ENCODE measurements at regions of chr2 and their contacts with region 1.

Region 1: DNA sequence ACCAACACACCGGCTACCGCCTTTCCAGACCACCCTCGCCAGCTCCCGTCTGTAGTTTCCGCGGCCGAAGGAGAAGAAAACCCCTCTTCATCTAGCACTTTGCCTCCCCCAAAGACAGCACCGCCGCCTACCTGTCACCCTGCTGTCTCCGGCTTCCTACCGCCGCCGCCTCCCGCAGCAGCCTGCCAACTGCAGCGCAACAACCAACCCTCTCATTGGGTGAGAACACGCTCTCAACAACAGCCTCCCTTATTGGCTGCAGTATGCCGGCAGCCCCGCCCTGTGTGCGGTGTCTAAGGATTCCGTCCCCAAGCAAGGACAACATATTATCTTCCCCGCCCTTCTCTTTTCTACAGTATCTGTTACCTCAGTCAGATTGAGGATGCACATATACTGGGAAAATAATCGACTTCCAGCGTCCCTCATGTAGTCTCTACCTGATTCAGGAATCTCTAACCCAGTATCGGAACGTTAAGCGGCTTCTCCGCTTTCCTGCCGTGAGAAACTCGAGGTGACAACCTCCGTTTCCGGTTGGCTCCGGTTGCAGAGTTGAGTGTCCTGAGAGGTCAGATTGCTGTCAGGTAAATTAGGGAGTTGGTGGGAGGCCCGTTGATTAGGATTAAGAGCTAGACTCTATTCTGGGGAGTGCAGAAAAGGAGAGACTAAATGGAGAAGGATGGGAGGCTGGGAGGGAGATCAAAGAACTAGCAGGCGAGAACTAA is at the starts of genes HYCC2 and NDUFB3:
- DNase-seq: peak; percentile 59
- H3K4me3 ChIP-seq: peak within 1 kb of the TSS; percentile 99
- CTCF ChIP-seq: peak; percentile 42

Region 2: GRCh38 chr2:200888704-200889625 is 182.7 kb before region 1 on chr2 and contains the starts of genes NIF3L1 and PPIL3:
- CTCF ChIA-PET with region 1: interaction called, 13 read pairs
- POLR2A ChIA-PET with region 1: no interaction called
- DNase-seq: peak; percentile 77
- H3K4me3 ChIP-seq: peak within 1 kb of the TSS; percentile 72
- CTCF ChIP-seq: peak; percentile 3

Region 3: DNA sequence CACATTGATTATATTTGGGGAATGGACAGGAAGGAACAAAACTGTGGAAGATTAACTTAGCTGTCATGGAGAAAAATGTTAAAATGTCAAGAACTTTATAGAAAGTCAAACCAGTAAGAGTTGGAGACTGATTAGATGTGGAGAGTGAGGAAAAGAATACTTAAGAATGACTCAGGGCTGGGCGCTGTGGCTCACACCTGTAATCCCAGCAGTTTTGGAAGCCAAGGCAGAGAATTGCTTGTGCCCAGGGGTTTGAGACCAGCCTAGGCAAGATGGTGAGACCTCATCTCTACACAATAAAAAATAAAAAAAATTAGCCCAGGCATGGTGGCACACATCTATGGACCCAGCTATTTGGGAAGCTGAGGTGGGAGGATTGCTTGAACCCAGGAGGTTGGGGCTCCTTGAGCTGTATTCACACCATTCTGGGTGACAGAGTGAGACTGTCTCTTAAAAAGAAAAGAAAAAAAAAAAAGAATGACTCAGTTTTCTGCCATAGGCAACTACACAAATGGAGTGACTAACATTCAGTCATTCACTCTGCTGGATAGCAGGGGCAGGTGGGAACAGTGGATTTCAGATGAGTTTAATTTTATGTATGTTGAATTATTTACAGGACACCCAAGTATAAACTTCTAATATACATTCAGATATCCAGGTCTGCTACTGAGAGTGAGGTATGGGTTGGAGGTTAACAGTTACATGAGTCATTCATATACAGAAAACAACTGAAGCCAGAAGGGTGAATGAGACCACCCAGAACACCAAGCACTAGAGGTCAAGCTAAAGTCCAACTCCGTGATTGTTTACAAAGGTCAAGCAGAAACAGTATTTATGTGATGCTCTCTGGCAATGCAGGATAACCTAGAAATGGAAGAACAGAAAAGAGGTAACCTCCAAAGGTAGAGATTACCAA is 142.0 kb before region 1 on chr2:
- CTCF ChIA-PET with region 1: interaction called, 10 read pairs
- POLR2A ChIA-PET with region 1: no interaction called
- DNase-seq: no peak
- H3K4me3 ChIP-seq: no peak overlapping the region
- CTCF ChIP-seq: no peak

Region 4: DNA sequence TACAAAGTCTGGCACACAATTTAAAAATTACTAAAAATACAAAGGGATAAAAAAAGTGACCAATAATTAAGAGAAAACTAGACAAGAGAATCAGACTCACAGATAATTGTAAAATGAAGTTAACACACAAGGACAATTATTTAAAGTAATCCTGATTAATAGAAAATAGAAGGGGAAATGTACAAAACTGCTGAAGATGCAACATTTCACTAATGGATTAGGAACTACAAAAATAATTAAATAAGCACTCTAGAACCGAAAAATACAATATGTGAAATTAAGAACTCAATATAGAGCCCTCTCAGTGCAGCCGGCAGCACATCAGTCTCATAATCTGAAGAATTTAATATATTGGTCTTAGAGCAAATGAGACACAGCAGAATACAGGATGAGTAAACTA is 24.8 kb before region 1 on chr2:
- CTCF ChIA-PET with region 1: interaction called, 23 read pairs
- POLR2A ChIA-PET with region 1: no interaction called
- DNase-seq: no peak
- H3K4me3 ChIP-seq: no peak overlapping the region
- CTCF ChIP-seq: no peak

Region 5: DNA sequence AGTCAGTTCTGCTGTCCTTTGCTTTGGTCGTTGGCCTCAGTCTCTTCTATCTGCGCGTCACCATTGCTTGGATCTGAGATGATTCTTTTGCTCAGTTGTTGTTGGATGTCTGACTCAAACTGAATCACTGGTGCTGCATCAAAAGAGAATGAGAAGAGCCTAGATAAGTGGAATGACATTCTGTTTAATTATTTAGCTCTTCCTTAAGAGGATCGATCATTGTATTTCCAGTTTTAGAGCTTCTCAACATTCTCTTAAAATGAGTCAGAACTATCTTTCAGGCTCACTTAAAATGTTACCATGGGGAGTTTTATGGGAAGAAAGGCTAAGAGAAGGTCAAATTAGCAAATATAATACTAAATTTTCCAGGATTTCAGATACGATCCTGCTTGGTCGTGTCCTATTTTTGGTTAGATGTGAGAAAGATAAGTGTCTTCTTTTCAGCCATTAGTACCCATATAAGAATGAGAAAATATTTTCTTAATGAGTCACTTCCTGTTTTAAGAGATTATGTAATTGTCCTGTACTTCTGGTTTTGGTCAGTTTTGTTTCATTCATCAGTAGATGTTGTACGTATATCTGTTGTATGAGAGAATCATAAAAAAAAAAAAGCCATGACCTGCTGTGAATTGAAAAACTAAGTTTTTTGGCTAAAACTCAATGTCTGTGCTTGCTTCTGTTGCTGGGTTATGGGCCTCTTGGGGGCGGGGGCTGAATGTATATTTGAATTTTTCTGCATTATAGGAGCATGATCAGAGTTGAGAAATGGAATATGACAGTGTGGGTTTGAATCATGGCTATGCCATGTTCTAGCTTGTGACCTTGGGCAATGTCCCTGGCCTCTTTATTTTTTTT is 79.7 kb after region 1 on chr2:
- CTCF ChIA-PET with region 1: interaction called, 13 read pairs
- POLR2A ChIA-PET with region 1: interaction called, 3 read pairs
- DNase-seq: peak; percentile 73
- H3K4me3 ChIP-seq: peak overlapping the region; percentile 3
- CTCF ChIP-seq: no peak

Region 6: GRCh38 chr2:201231781-201232466 is 160.3 kb after region 1 on chr2:
- CTCF ChIA-PET with region 1: interaction called, 14 read pairs
- POLR2A ChIA-PET with region 1: no interaction called
- DNase-seq: peak; percentile 47
- H3K4me3 ChIP-seq: no peak overlapping the region
- CTCF ChIP-seq: peak; percentile 87

Region 7: GRCh38 chr2:201466050-201466675 is 394.5 kb after region 1 on chr2:
- CTCF ChIA-PET with region 1: no interaction called
- POLR2A ChIA-PET with region 1: no interaction called
- DNase-seq: no peak
- H3K4me3 ChIP-seq: no peak overlapping the region
- CTCF ChIP-seq: no peak